Heart left ventricle (tissue), 16 donors: ENCODE measurements at regions of chr17 and their contacts with region 1.

Region 1: DNA sequence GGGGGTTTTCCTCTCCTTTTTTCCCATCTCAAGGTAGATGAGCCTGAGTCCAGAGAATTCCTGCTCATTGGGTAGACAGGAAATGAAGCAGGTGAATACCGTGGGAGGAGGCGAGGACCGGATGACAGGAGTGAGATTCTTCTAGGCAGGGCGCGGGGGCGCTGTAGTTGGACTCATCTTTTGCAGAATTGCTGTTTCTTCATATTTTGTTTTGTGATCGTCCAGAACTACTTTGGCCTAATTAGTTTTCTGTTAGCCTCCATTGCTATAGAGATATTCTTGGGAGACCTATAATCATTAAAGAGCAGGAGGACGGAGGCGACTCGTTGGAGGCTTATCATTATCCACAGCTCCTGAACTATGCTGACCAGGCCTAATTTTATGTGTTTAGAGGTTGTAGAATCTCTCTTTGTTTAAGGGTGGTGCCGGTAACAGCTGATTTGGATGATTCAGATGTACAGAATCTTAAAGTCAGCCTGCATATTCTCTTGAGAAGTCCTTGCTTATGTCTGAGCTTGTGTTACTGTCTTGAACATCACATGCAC is 650 bp downstream of the ATP6V0A1 start:
- DNase-seq: peak in 4 of 5 donors; percentile 38 to 55 (median 45)
- ATAC-seq: peak; percentile 33 to 53 (median 42)
- H3K4me3 ChIP-seq: peak overlapping the region; percentile 43 to 93 (median 80)
- H3K27ac ChIP-seq: peak overlapping the region; percentile 77 to 98 (median 92)
- H3K4me1 ChIP-seq: peaks cover 0 to 73% (median 25%) of the 10 kb centered on the region in 12 donors
- H3K27me3 ChIP-seq: no peaks in the 10 kb centered on the region
- CTCF ChIP-seq: peak in 7 of 12 donors; percentile 6 to 51 (median 42)
- POLR2A ChIP-seq: no peak

Region 2: DNA sequence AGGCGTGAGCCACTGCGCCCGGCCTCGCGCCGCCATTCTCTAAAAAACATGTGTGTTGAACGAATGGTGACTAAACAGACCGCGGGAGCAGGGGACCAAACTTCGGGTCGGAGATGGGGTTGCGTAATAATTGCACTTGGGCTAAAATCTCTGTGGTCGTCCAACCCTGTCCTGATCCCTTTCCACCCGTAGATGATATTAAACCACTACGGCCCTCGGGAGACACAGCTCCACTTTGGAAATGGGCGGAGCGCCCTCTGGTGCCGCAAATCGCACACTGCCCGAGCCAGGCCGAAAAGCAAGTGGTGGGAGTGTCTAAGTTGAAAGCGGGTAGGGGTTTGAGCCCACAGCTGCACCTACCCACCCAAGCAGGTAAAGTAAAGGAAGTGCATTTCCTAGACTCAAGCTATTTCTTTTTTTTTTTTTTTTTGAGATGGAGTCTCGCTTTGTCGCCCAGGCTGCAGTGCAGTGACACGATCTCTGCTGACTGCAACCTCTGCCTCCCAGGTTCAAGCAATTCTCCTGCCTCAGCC is 53.3 kb before region 1 on chr17:
- intact Hi-C with region 1: loop called in 1 of 10 experiments (anchors 2 kb)
- DNase-seq: peak; percentile 83 to 92 (median 83)
- ATAC-seq: peak; percentile 56 to 73 (median 68)
- H3K4me3 ChIP-seq: peak overlapping the region in 7 of 12 donors; percentile 8 to 33 (median 20)
- H3K27ac ChIP-seq: peak overlapping the region; percentile 65 to 100 (median 82)
- H3K4me1 ChIP-seq: peaks cover 27 to 93% (median 79%) of the 10 kb centered on the region in 12 donors
- H3K27me3 ChIP-seq: no peaks in the 10 kb centered on the region
- CTCF ChIP-seq: peak; percentile 77 to 92 (median 84)
- POLR2A ChIP-seq: no peak

Region 3: DNA sequence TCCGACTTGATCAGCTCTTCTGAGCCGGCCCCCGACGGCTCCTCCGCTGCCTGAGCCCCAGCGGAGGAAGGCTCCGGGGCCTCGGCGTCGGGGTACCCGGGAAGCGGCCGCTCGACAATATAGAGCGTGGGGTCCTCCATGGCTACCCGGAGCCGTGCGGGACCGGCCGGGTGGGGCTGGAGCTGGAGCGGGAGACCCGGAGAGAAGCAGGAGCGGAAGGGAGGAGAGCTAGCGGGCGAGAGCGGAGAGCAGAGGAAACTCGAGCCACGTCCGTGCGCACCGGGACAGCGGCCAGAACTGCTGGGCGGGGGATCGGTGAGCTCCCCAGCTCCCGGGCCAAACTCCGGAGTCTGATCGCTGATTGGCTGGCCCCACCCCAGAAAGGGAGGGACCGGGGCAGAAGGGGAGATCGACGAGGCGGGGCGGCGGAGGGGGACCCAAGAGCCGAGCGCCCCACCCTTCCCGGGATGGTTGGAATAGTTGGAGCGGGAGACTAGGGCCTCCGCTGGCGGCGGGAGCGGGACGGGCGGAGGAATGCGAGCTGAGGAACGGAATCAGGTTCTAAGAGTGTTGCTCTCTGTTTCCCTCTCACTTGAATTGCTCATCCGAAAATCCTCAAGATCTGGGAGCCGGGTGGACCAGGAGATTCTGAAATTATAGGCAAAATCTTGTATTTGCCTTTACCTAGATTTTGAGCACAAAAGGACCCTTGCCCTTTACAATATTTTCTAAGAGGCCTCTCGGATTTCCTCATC is 36.2 kb before region 1 on chr17 and contains the start of gene CAVIN1:
- intact Hi-C with region 1: loop called in 9 of 10 experiments (anchors 1 to 5 kb)
- DNase-seq: peak; percentile 99 to 100 (median 100)
- ATAC-seq: peak; percentile 90 to 96 (median 92)
- H3K4me3 ChIP-seq: peak within 1 kb of the TSS; percentile 71 to 100 (median 92)
- H3K27ac ChIP-seq: peak within 1 kb of the TSS; percentile 93 to 100 (median 99)
- H3K4me1 ChIP-seq: peaks cover 6 to 54% (median 36%) of the 10 kb centered on the region in 12 donors
- H3K27me3 ChIP-seq: peaks cover 0 to 31% (median 0%) of the 10 kb centered on the region in 9 donors
- CTCF ChIP-seq: peak in 2 of 12 donors; percentile 13 to 22
- POLR2A ChIP-seq: peak; percentile 77 to 97
- total RNA-seq, gene CAVIN1: 195 to 318 (median 253) TPM

Region 4: DNA sequence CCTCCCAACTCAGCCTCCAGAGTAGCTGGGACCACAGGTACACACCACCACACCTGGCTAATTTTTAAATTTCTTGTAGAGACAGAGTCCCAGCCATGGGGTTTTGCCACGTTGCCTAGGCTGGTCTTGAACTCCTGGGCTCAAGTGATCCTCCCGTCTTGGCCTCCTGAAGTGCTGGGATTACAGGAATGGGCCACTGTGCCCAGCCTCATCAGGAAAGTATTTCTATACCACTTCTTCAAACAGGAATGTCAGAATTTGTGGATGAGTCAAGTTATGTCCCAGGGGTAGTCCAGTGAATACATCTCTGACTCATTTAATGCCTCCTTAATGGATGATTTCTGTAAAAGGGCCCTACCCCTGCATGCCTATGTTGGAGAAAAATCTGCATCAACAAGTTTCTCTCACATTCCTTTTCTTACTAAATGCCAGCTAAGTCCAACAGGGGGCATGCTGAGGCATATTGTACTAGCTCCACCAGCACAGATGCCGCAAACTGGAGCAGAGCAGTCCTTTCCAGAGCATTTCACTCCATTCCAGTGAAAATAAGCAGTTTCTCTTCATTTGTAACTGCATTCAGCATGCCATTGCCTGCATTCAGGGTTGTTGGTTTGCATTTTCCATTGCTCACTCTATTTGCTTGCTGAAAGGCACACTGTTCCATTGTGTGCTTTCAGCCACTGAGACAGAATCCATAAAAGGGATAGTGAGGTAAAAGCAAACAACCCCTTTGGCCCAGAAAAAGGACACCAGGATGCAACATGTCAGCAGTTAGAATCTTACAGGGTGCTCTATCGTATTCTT is 31.0 kb before region 1 on chr17:
- intact Hi-C with region 1: loop called in 9 of 10 experiments (anchors 1 to 5 kb)
- DNase-seq: peak in 1 of 5 donors; percentile 53
- ATAC-seq: peak in 3 of 4 donors; percentile 51 to 71 (median 60)
- H3K4me3 ChIP-seq: peak overlapping the region in 1 of 12 donors; percentile 5
- H3K27ac ChIP-seq: peak overlapping the region in 2 of 12 donors; percentile 20 to 31
- H3K4me1 ChIP-seq: peaks cover 0 to 44% (median 14%) of the 10 kb centered on the region in 12 donors
- H3K27me3 ChIP-seq: peaks cover 0 to 5% (median 0%) of the 10 kb centered on the region in 9 donors
- CTCF ChIP-seq: peak; percentile 40 to 72 (median 58)
- POLR2A ChIP-seq: no peak